Common myeloid progenitor, CD34-positive (primary cell): ENCODE measurements at regions of chr17 and their contacts with region 1.

Region 1: GRCh38 chr17:75109407-75110233 is at the start of gene ARMC7:
- DNase-seq: peak; percentile 79 to 82 (median 81)
- H3K4me3 ChIP-seq: peak within 1 kb of the TSS; percentile 51 to 95 (median 86)
- H3K27ac ChIP-seq: peak within 1 kb of the TSS in 1 of 2 experiments; percentile 74
- H3K4me1 ChIP-seq: peaks cover 0 to 41% (median 35%) of the 10 kb centered on the region in 4 experiments
- H3K27me3 ChIP-seq: no peaks in the 10 kb centered on the region

Region 2: DNA sequence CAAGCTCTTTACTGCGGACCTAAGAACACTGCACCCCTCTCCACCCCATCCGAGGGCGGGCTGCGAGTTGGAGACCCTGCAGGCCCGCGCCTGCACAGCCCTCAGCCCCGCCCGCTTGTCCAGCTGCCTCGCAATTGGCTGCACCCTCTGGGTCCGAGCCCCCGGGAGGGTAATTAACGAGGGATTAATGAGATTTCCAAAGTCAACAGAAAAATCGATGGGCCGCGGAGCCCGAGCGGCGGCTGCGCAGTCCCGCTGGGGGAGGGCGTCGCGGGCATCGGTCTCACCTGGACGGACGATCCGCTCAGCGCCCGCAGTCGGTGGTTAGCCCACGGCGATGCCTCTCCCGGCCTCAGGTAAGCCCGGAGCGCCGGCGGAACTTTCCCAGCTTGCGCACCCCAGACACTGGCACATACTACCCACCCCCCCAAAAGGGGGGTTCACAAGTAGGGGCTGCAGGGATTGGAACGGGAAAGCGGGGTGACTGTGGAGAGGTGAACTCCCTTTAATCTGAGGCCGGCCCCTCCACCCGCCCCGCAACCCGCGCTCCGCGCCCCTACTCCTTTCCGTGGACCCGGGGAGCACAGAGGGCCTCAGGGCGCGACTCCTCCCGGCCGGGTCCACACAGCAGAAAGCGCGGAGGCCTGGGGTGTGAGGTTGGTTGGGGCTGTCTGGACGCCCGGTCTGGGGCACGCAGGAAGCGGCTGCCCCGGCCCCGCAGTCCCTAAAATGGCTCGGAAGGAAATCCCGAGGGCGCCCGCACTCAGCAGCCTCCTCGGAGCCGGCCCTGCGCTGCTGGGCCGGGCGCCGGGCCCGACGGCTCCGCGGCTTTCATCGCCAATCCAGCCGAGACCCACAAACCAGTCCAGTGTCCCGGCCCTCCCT is 173.8 kb before region 1 on chr17 and contains the start of gene OTOP3:
- CTCF ChIA-PET with region 1: no interaction called
- POLR2A ChIA-PET with region 1: no interaction called
- DNase-seq: peak in 2 of 3 donors; percentile 28 to 30
- H3K4me3 ChIP-seq: peak within 1 kb of the TSS in 3 of 7 experiments; percentile 13 to 26 (median 13)
- H3K27ac ChIP-seq: no peak within 1 kb of the TSS
- H3K4me1 ChIP-seq: peaks cover 0 to 19% (median 6%) of the 10 kb centered on the region in 4 experiments
- H3K27me3 ChIP-seq: peaks cover 2 to 62% (median 26%) of the 10 kb centered on the region in 5 experiments

Region 3: GRCh38 chr17:75059369-75060345 is 50.0 kb before region 1 on chr17:
- CTCF ChIA-PET with region 1: interaction called, 95 read pairs
- POLR2A ChIA-PET with region 1: interaction called, 6 read pairs
- DNase-seq: peak; percentile 69 to 79 (median 78)
- H3K4me3 ChIP-seq: no peak overlapping the region
- H3K27ac ChIP-seq: peak overlapping the region; percentile 46 to 68
- H3K4me1 ChIP-seq: peaks cover 1 to 10% (median 5%) of the 10 kb centered on the region in 4 experiments
- H3K27me3 ChIP-seq: no peaks in the 10 kb centered on the region

Region 4: GRCh38 chr17:75077496-75078283 is 31.9 kb before region 1 on chr17:
- CTCF ChIA-PET with region 1: interaction called, 43 read pairs
- POLR2A ChIA-PET with region 1: interaction called, 3 read pairs
- DNase-seq: peak; percentile 47 to 82 (median 72)
- H3K4me3 ChIP-seq: peak overlapping the region in 6 of 7 experiments; percentile 19 to 75 (median 59)
- H3K27ac ChIP-seq: no peak overlapping the region
- H3K4me1 ChIP-seq: peaks cover 0 to 20% (median 9%) of the 10 kb centered on the region in 4 experiments
- H3K27me3 ChIP-seq: no peaks in the 10 kb centered on the region

Region 5: DNA sequence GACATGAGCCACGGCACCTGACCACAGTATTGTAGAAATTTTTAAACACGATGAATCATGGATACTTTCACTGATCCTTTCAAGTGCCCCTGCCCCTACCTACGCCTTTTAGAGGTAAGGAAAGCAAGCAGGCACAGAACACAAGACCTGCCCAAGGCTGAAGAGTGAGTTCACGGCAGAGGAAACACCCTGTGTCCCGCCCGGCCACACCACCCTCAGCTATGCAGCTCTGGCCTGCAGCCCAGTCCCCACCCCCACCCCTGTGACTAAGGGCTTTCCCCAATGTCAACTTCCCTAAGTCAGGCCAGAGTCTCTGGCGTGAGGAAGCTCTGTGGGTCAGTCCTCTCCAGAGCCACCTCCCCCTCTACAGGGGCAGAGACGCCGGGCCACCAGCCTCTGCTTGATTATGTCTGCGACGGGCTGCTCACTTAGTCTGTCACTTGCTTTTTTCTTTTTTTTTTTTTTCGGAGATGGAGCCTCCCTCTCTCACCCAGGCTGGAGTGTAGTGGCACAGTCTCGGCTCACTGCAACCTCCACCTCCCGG is 13.5 kb before region 1 on chr17:
- CTCF ChIA-PET with region 1: interaction called, 17 read pairs
- POLR2A ChIA-PET with region 1: interaction called, 5 read pairs
- DNase-seq: peak; percentile 78 to 95 (median 95)
- H3K4me3 ChIP-seq: peak overlapping the region in 2 of 7 experiments; percentile 26 to 50
- H3K27ac ChIP-seq: peak overlapping the region in 1 of 2 experiments; percentile 64
- H3K4me1 ChIP-seq: peaks cover 0 to 41% (median 18%) of the 10 kb centered on the region in 4 experiments
- H3K27me3 ChIP-seq: no peaks in the 10 kb centered on the region

Region 6: GRCh38 chr17:75131280-75132017 is 21.8 kb after region 1 on chr17 and contains the start of gene NT5C:
- CTCF ChIA-PET with region 1: interaction called, 168 read pairs
- POLR2A ChIA-PET with region 1: interaction called, 11 read pairs
- DNase-seq: peak; percentile 66 to 83 (median 71)
- H3K4me3 ChIP-seq: peak within 1 kb of the TSS; percentile 64 to 88 (median 83)
- H3K27ac ChIP-seq: peak within 1 kb of the TSS; percentile 50 to 86
- H3K4me1 ChIP-seq: peaks cover 0 to 23% (median 17%) of the 10 kb centered on the region in 4 experiments
- H3K27me3 ChIP-seq: no peaks in the 10 kb centered on the region

Region 7: GRCh38 chr17:75173526-75173925 is 63.9 kb after region 1 on chr17:
- CTCF ChIA-PET with region 1: interaction called, 156 read pairs
- POLR2A ChIA-PET with region 1: interaction called, 9 read pairs
- DNase-seq: no peak
- H3K4me3 ChIP-seq: no peak overlapping the region
- H3K27ac ChIP-seq: peak overlapping the region in 1 of 2 experiments; percentile 37
- H3K4me1 ChIP-seq: peaks cover 0 to 2% (median 0%) of the 10 kb centered on the region in 4 experiments
- H3K27me3 ChIP-seq: no peaks in the 10 kb centered on the region

Region 8: GRCh38 chr17:75261336-75262111 is 151.9 kb after region 1 on chr17 and contains the starts of genes GGA3 and MRPS7:
- CTCF ChIA-PET with region 1: no interaction called
- POLR2A ChIA-PET with region 1: no interaction called
- DNase-seq: peak; percentile 93 to 96 (median 95)
- H3K4me3 ChIP-seq: peak within 1 kb of the TSS; percentile 77 to 99 (median 91)
- H3K27ac ChIP-seq: peak within 1 kb of the TSS; percentile 99 to 100
- H3K4me1 ChIP-seq: peaks cover 10 to 39% (median 28%) of the 10 kb centered on the region in 4 experiments
- H3K27me3 ChIP-seq: no peaks in the 10 kb centered on the region